ENCODE measurements at regions of chr1 and their contacts with region 1.

Region 1: DNA sequence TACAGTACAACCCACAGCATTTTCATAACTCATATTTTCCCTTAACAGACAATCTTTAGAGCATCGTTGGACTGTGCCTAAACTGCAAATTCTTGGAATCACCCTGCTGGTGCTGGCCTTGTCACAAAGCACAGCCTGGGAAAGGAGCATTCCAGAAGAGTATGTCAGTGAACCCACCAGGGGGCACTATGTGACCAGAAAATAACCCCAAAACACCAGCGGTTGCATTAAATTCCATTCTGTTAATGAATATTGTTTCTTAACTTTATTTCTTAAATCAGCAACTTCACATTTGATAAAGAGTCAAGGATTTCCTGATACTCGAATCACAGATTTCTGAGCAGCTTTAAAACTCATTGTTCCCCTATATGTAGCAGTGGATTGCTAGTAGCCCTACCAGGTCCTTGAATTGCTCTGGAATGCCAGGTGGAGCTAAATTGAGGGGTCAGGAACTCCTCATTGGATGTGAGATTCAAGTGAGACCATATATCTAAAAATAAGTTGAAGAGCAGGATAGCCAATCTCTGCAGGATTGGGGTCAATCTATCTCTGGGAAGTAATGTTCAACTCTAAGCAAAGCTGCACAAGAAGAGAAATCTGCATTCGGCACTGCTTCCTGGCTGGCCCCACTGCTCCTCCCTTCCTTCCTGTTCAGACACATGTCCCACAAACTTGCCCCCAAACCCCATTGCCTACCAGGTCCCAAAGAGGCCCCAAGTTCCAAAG is 12.7 kb upstream of the RAB4A start:
- DNase-seq: peak; percentile 19 to 77 (median 65)
- ATAC-seq: peak; percentile 67
- H3K4me3 ChIP-seq: peak overlapping the region; percentile 7
- H3K4me3 Mint-ChIP-seq: peak overlapping the region in 9 of 10 donors; percentile 9 to 76 (median 61)
- H3K27ac ChIP-seq: no peak overlapping the region
- H3K27ac Mint-ChIP-seq: peak overlapping the region; percentile 14 to 88 (median 67)
- H3K4me1 ChIP-seq: peaks cover 24 to 35% of the 10 kb centered on the region in 2 donors
- H3K4me1 Mint-ChIP-seq: peaks cover 21 to 36% (median 30%) of the 10 kb centered on the region in 7 donors
- H3K27me3 ChIP-seq: no peaks in the 10 kb centered on the region
- H3K27me3 Mint-ChIP-seq: peaks cover 0 to 6% (median 0%) of the 10 kb centered on the region in 5 donors

Region 2: DNA sequence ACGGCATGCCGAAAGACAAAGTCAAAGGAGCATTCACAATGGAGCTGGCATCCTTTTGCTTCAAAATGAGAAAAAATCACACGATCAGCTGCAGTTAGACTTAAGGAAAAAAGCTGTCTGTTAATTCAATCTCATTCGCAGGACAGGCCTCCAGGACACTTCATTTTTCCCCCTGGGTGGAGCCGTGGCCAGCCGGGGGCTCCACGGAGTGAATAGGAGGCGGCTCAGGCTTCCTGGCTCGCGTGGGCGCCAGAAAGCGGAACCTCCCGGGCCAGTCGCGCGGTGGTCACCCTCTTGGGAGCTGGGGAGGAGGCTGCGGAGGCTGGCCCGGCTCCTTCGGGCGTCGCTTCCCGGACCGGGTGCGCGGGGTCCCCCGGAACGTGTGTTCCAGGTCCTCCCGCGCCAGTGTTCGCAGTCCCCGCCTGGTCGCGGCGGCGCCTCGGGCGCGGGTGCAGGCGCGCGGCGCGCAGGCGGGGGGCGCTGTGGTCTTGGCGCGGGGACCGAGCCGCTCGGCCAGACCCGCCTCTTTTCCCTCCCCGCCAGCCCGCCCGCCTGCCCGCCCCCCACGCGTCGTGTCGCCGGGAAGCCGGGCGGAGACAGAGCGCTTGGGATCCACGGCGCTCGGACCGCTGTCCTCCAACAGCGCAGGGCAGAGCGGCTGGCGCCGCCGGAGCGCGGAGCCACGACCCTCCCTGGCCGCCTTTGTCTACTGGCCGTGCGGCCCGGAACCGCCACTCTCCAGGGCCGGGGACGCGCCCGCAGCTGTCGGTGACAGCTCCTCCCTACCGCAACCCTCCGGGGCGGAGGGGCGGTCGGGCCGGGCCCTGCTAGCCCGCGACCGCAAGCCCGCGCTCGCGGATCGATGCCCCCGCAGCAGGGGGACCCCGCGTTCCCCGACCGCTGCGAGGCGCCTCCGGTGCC is 523.1 kb before region 1 on chr1 and contains the start of gene RHOU:
- CTCF ChIA-PET with region 1: interaction called, 33 read pairs
- POLR2A ChIA-PET with region 1: interaction called, 6 read pairs
- intact Hi-C with region 1: loop called (anchors 1 kb)
- DNase-seq: peak; percentile 44 to 80 (median 71)
- ATAC-seq: peak; percentile 92
- H3K4me3 ChIP-seq: peak within 1 kb of the TSS; percentile 70
- H3K4me3 Mint-ChIP-seq: peak within 1 kb of the TSS; percentile 80 to 94 (median 90)
- H3K27ac ChIP-seq: peak within 1 kb of the TSS; percentile 27
- H3K27ac Mint-ChIP-seq: peak within 1 kb of the TSS; percentile 10 to 64 (median 45)
- H3K4me1 ChIP-seq: peaks cover 0 to 7% of the 10 kb centered on the region in 2 donors
- H3K4me1 Mint-ChIP-seq: peaks cover 9 to 34% (median 14%) of the 10 kb centered on the region in 7 donors
- H3K27me3 ChIP-seq: no peaks in the 10 kb centered on the region
- H3K27me3 Mint-ChIP-seq: peaks cover 0 to 52% (median 13%) of the 10 kb centered on the region in 5 donors
- total RNA-seq, gene RHOU: 1.3 to 6.5 (median 1.8) TPM

Region 3: DNA sequence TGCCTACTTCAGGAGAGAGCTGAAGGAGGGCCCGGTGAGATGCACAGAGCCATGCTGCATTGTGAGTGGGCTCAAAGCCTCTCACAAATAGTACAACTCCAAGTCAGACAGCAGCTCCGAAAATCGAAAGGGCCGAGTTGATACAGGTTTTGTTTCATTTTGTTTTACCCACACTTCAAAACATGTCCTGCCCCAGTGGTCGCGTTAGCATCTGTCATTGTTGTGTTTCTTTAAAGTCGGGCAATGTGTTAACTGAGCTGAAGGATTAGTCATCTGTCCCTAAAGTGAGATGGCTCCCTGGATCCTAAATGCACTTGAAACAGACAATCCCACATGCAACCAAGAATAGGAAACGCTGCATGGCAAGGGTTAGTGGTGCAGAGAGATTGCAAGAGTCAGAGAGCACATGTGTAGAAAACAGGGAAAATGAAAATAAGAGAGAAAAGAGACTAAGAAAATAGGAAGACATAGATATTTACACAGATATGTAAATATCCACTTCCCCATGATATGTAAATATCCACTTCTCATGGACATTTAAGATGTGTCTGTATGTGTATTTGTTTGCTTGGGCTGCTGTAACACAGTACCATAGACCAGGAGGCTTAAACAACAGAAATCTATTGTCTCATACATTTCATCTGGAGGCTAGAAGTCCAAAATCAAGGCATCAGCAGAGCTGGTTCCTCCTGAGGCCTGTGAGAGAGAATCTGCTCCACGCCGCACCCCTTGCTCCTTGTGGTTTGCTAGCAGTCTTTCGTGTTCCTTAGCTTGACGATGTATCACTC is 118.7 kb before region 1 on chr1:
- CTCF ChIA-PET with region 1: no interaction called
- POLR2A ChIA-PET with region 1: no interaction called
- intact Hi-C with region 1: loop called in 1 of 2 experiments (anchors 5 kb)
- DNase-seq: peak in 1 of 9 donors; percentile 23
- ATAC-seq: no peak
- H3K4me3 ChIP-seq: peak overlapping the region; percentile 38
- H3K4me3 Mint-ChIP-seq: peak overlapping the region; percentile 60 to 82 (median 72)
- H3K27ac ChIP-seq: no peak overlapping the region
- H3K27ac Mint-ChIP-seq: peak overlapping the region; percentile 35 to 90 (median 55)
- H3K4me1 ChIP-seq: peaks cover 0 to 29% of the 10 kb centered on the region in 2 donors
- H3K4me1 Mint-ChIP-seq: peaks cover 20 to 64% (median 48%) of the 10 kb centered on the region in 7 donors
- H3K27me3 ChIP-seq: no peaks in the 10 kb centered on the region
- H3K27me3 Mint-ChIP-seq: no peaks in the 10 kb centered on the region

Region 4: DNA sequence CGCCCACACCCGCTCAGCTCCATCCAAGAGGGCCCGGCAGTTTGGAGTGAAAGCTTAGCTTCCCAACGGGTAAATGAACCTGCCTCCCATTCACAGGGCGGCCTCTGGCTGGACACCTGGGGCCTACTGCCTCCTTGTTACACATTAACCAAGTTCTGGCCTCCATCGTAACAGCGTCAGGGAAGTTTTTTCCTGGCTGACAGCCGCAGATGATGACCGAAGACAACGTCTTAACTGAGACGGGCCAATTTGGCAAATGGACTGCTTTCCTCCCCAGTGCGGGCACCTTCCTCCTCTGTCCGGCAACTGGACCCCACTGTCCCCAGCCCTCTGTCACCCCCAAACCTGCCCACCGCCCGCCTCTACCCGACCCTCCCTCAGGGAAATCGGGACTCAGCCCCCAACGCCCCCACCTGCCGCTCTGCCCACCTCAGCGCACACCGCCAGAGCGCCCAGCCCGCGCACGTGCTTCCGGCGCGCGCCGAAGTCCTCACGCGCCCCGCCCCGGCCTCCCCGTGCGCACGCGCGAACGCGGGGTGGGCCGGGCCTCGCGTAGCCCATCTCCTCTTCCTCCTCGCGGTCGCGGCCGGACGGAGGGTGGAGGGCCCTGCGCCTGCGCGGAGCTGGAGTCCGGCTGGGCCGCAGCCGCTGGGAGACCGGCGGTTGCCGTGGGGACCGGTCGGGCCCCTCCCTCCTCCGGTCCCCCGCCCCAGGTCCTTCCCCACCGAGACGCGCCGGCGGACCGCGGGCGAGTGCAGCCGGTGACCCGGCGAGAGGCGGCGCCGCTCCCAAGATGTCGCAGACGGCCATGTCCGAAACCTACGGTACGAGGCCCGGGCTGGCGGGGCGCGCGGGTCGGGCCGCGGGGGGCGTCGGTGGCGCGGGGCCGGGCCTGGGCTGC is 12.6 kb after region 1 on chr1 and contains the start of gene RAB4A:
- CTCF ChIA-PET with region 1: interaction called, 14 read pairs
- POLR2A ChIA-PET with region 1: no interaction called
- intact Hi-C with region 1: loop called in 1 of 2 experiments (anchors 2 kb)
- DNase-seq: peak; percentile 48 to 85 (median 75)
- ATAC-seq: peak; percentile 94
- H3K4me3 ChIP-seq: peak within 1 kb of the TSS; percentile 77
- H3K4me3 Mint-ChIP-seq: peak within 1 kb of the TSS; percentile 89 to 99 (median 94)
- H3K27ac ChIP-seq: peak within 1 kb of the TSS; percentile 62
- H3K27ac Mint-ChIP-seq: peak within 1 kb of the TSS; percentile 76 to 95 (median 89)
- H3K4me1 ChIP-seq: peaks cover 13 to 17% of the 10 kb centered on the region in 2 donors
- H3K4me1 Mint-ChIP-seq: peaks cover 25 to 45% (median 35%) of the 10 kb centered on the region in 7 donors
- H3K27me3 ChIP-seq: no peaks in the 10 kb centered on the region
- H3K27me3 Mint-ChIP-seq: no peaks in the 10 kb centered on the region
- total RNA-seq, gene RAB4A: 24.0 to 47.9 (median 36.9) TPM

Region 5: GRCh38 chr1:229452956-229453801 is 195.0 kb after region 1 on chr1:
- CTCF ChIA-PET with region 1: interaction called, 4 read pairs
- POLR2A ChIA-PET with region 1: interaction called, 3 read pairs
- intact Hi-C with region 1: loop called (anchors 1 kb)
- DNase-seq: no peak
- ATAC-seq: no peak
- H3K4me3 ChIP-seq: no peak overlapping the region
- H3K4me3 Mint-ChIP-seq: no peak overlapping the region
- H3K27ac ChIP-seq: no peak overlapping the region
- H3K27ac Mint-ChIP-seq: no peak overlapping the region
- H3K4me1 ChIP-seq: no peaks in the 10 kb centered on the region
- H3K4me1 Mint-ChIP-seq: peaks cover 0 to 3% (median 0%) of the 10 kb centered on the region in 7 donors
- H3K27me3 ChIP-seq: no peaks in the 10 kb centered on the region
- H3K27me3 Mint-ChIP-seq: no peaks in the 10 kb centered on the region

Region 6: DNA sequence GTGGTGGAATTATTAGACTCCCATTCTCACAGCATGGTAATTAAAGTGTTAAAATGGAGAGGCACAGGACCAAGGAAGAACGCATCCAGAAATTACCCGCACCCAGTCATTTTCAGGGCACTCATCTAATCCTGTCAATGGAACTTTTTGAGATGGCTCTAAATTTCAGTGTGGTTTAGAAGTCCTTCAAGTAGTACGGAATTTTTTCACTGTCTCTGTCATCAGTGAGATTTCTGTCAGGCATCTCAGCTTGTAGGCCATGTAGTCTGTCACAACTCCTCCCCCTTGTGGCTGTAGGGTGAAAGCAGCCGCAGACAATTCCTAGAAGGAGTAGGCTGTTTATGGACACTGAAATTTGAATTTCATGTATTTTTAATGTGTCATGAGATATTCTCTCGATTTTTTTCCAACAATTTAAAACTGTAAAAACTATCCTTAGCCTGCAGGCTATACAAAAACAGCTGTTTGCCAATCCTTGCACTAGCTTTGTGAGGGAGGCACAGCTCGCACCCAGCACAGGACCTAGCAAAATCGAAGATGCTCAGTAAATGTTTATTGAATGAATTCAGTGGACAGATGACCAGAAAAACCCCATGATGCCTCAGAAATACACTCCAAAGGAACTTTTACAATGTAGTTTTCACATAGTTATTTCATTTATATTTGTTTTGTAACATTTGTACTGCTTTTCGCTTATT is 256.5 kb after region 1 on chr1:
- CTCF ChIA-PET with region 1: interaction called, 39 read pairs
- POLR2A ChIA-PET with region 1: interaction called, 17 read pairs
- intact Hi-C with region 1: loop called (anchors 1 kb)
- DNase-seq: peak in 8 of 9 donors; percentile 34 to 76 (median 70)
- ATAC-seq: peak; percentile 98
- H3K4me3 ChIP-seq: no peak overlapping the region
- H3K4me3 Mint-ChIP-seq: no peak overlapping the region
- H3K27ac ChIP-seq: no peak overlapping the region
- H3K27ac Mint-ChIP-seq: peak overlapping the region in 5 of 9 donors; percentile 6 to 86 (median 32)
- H3K4me1 ChIP-seq: no peaks in the 10 kb centered on the region
- H3K4me1 Mint-ChIP-seq: peaks cover 0 to 9% (median 7%) of the 10 kb centered on the region in 7 donors
- H3K27me3 ChIP-seq: no peaks in the 10 kb centered on the region
- H3K27me3 Mint-ChIP-seq: peaks cover 0 to 5% (median 0%) of the 10 kb centered on the region in 5 donors

Measured in naive thymus-derived CD4-positive, alpha-beta T cell (primary cell).